Activated B cell treated with CpG ODN at 0.5 μM for 24 hours (primary cell): ENCODE measurements at regions of chr3 and their contacts with region 1.

Region 1: DNA sequence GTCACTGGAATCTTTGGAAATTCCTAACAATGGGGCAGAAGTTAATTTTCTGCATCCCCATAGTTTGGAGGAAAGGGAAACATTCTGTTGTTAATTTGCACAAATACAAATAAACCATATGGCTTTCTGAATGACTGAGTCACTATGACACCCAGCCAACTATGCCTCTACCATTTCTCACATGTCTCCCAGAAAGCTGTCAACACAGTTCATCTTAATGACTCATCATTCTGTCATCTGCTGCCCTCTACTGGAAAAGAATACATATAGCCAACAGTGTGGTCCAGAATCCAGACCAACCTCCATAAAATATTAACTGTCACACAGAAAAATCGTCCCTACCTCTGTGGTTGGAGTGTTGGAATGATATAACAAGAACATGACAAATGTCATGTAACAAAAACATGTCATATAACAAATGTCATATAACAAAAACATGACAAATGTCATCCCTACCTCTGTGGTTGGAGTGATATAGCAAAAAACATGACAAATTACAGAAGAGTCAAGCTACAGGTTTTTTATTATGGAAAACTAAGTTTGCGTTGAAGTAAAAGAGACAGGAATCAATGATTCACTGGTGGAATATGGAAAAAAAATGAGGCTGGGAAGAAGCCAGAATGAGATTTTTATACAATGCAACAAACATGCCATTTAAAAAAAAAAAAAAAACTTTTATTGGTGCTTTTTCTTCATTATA is 47.7 kb upstream of the GYG1 start:
- DNase-seq: no peak
- ATAC-seq: peak; percentile 78
- H3K4me3 Mint-ChIP-seq: no peak overlapping the region
- H3K27ac Mint-ChIP-seq: no peak overlapping the region
- H3K4me1 Mint-ChIP-seq: no peaks in the 10 kb centered on the region
- H3K27me3 Mint-ChIP-seq: peaks cover 9% of the 10 kb centered on the region
- CTCF ChIP-seq: no peak

Region 2: GRCh38 chr3:148309390-148310035 is 634.1 kb before region 1 on chr3:
- CTCF ChIA-PET with region 1: no interaction called
- POLR2A ChIA-PET with region 1: no interaction called
- intact Hi-C with region 1: loop called (anchors 5 kb)
- DNase-seq: no peak
- ATAC-seq: no peak
- H3K4me3 Mint-ChIP-seq: no peak overlapping the region
- H3K27ac Mint-ChIP-seq: no peak overlapping the region
- H3K4me1 Mint-ChIP-seq: no peaks in the 10 kb centered on the region
- H3K27me3 Mint-ChIP-seq: no peaks in the 10 kb centered on the region
- CTCF ChIP-seq: no peak

Region 3: GRCh38 chr3:148742103-148742502 is 201.6 kb before region 1 on chr3:
- CTCF ChIA-PET with region 1: no interaction called
- POLR2A ChIA-PET with region 1: no interaction called
- intact Hi-C with region 1: no loop called
- DNase-seq: no peak
- ATAC-seq: no peak
- H3K4me3 Mint-ChIP-seq: no peak overlapping the region
- H3K27ac Mint-ChIP-seq: no peak overlapping the region
- H3K4me1 Mint-ChIP-seq: no peaks in the 10 kb centered on the region
- H3K27me3 Mint-ChIP-seq: no peaks in the 10 kb centered on the region
- CTCF ChIP-seq: no peak

Region 4: DNA sequence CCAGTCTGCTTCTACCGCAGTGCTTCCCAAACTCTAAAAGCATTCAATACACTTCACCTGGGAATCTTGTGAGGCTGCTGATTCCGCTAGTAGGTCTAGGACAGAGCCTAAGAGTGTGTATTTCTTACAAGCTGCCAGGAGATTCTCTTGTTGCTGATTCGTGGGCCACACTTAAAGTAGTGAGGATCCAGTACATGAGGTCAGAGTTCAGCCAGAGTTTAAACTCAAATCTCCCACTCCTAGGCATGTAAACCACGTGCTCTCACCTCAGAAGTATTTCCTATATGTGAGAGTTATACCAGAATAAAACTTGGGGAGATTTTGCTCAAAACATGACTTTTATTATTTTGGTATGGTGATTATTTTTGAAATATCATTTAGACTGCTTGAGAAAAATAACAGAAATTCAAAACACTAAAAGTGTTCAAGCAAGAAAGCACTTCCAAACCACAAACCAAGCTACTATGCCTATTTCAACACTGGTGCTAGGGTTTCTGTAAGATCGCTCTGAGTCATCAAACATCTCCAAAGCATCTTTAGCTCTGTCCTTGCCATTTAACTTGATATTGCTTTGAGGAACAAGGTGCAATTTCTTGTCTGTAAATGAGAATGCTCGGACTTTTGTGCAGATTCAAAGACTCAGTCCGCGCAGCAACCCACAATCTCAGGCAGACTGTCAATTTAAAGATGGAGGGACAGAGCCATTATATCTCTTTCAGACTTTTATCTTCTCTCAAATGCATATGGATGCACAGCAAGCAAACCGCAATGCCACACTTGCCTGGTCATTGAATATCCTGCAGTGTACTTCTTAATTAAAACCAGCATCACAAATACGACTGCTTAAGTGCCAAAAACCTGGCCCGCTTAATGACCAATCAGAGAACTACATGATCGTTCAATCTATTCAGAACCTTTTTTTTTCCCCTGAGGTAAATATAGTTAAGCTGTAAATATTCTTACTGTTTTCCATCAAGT is 186.1 kb before region 1 on chr3:
- CTCF ChIA-PET with region 1: no interaction called
- POLR2A ChIA-PET with region 1: no interaction called
- intact Hi-C with region 1: no loop called
- DNase-seq: no peak
- ATAC-seq: no peak
- H3K4me3 Mint-ChIP-seq: no peak overlapping the region
- H3K27ac Mint-ChIP-seq: no peak overlapping the region
- H3K4me1 Mint-ChIP-seq: no peaks in the 10 kb centered on the region
- H3K27me3 Mint-ChIP-seq: no peaks in the 10 kb centered on the region
- CTCF ChIP-seq: no peak

Region 5: DNA sequence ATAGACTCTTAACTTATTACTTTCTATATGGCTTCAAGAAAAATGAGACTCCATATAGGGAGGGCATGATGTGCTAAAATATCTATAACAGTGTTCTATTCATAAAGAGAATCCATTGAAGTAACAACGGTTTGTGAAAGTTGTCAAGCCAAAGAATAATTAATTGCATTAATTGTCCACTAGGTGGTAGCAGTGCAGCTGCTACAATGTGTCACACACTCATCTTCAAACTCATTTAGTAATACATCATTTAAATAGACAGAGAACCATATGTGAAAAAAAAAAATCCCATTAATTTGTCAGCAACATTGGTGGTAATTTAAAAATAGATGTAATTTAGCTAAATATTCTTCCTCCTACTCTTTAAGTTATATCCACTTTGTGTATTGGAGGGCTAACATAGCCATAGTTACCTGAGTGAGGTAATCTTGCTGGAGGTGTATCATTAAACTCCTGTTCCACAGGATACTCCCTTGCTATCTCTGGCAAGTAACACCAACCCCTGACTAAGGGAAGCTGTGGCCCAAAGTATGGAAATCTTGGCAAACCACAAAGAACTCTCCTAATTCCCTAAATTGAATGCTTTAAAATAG is 82.3 kb before region 1 on chr3:
- CTCF ChIA-PET with region 1: interaction called, 15 read pairs
- POLR2A ChIA-PET with region 1: no interaction called
- intact Hi-C with region 1: loop called (anchors 1 kb)
- DNase-seq: no peak
- ATAC-seq: peak; percentile 31
- H3K4me3 Mint-ChIP-seq: no peak overlapping the region
- H3K27ac Mint-ChIP-seq: no peak overlapping the region
- H3K4me1 Mint-ChIP-seq: no peaks in the 10 kb centered on the region
- H3K27me3 Mint-ChIP-seq: peaks cover 9% of the 10 kb centered on the region
- CTCF ChIP-seq: peak; percentile 70